ENCODE measurements at regions of chr19 and their contacts with region 1.

Region 1: DNA sequence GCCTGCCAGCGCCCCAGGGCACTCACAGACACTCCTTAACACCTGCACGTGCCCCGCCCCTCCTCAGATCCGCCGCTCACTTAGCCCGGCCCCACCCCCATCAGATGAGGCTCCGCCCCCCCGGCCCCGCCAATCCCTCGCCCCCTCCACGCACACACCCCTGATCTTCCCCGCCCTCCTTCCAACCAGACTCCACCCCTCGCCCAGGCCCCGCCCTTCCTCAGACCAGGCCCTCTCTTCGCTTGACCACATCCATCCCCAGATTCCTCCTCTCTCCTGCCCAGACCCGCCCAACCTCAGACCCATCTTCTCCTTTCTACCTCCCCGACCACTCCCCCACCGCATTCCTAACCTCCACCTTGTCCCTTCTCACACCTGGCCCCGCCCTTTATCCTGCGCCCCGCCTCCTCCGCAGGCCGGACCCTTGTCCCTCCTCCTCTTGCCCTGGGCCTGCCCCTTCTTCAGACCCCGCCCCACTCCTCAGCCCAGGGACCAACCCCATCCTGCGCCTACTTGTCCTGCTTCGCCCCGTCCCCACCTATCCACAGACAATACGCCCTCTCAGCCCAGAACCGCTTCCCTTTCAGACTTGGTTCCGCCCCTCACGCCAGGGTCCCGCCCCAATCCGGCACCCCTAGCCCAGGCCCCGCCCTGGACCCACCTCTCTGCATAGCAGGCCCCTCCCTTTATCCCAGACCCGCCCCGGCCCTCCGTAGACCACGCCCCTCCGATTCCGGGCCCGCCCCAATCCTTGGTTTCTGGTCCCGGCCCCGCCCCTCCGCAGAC is 452 bp upstream of the KLHL26 start:
- DNase-seq: peak; percentile 100
- ATAC-seq: peak; percentile 92
- H3K4me3 Mint-ChIP-seq: peak overlapping the region; percentile 84
- H3K27ac Mint-ChIP-seq: peak overlapping the region; percentile 78
- H3K4me1 Mint-ChIP-seq: peaks cover 24% of the 10 kb centered on the region
- H3K27me3 Mint-ChIP-seq: no peaks in the 10 kb centered on the region

Region 2: DNA sequence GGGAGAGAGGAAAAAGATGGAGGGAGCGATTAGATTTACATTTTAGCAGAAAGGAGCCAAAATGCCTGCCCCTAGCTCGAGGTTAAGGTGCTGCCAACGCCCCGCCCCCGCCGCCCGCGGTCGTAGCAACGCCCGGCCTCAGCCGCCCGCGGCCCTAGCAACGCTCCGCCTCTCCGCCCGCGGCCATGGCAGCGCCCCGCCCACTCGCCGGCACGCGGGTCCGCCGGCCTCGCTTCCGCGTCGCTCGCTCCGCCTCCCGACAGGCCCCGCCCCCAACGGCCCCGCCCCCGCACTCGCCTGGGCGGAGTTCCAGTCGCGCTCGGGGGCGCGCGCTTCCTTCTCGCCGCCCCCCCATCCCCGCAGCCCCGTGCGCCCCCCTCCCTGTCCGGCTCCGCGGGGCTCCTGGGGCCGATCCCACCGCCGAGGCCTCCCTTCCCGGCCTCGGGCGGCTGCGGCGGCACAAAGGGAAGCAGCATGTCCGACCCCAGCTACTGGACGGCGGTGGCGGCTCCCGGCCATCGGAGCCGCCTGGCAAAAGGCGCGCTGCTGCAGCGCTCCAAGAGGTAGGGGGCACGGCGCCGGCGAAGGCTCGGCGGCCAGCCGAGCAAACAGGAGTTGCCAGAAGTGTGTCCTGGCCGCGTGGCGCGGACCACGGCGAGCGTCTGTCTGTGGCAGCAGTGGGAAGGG is 518.5 kb before region 1 on chr19:
- CTCF ChIA-PET with region 1: no interaction called
- POLR2A ChIA-PET with region 1: no interaction called
- intact Hi-C with region 1: loop called in 1 of 2 experiments (anchors 1 kb)
- DNase-seq: peak; percentile 97
- ATAC-seq: peak; percentile 79
- H3K4me3 Mint-ChIP-seq: peak overlapping the region; percentile 74
- H3K27ac Mint-ChIP-seq: peak overlapping the region; percentile 84
- H3K4me1 Mint-ChIP-seq: peaks cover 35% of the 10 kb centered on the region
- H3K27me3 Mint-ChIP-seq: no peaks in the 10 kb centered on the region

Region 3: GRCh38 chr19:18464646-18465045 is 171.7 kb before region 1 on chr19:
- CTCF ChIA-PET with region 1: no interaction called
- POLR2A ChIA-PET with region 1: no interaction called
- intact Hi-C with region 1: no loop called
- DNase-seq: no peak
- ATAC-seq: no peak
- H3K4me3 Mint-ChIP-seq: no peak overlapping the region
- H3K27ac Mint-ChIP-seq: peak overlapping the region; percentile 80
- H3K4me1 Mint-ChIP-seq: peaks cover 11% of the 10 kb centered on the region
- H3K27me3 Mint-ChIP-seq: no peaks in the 10 kb centered on the region

Region 4: DNA sequence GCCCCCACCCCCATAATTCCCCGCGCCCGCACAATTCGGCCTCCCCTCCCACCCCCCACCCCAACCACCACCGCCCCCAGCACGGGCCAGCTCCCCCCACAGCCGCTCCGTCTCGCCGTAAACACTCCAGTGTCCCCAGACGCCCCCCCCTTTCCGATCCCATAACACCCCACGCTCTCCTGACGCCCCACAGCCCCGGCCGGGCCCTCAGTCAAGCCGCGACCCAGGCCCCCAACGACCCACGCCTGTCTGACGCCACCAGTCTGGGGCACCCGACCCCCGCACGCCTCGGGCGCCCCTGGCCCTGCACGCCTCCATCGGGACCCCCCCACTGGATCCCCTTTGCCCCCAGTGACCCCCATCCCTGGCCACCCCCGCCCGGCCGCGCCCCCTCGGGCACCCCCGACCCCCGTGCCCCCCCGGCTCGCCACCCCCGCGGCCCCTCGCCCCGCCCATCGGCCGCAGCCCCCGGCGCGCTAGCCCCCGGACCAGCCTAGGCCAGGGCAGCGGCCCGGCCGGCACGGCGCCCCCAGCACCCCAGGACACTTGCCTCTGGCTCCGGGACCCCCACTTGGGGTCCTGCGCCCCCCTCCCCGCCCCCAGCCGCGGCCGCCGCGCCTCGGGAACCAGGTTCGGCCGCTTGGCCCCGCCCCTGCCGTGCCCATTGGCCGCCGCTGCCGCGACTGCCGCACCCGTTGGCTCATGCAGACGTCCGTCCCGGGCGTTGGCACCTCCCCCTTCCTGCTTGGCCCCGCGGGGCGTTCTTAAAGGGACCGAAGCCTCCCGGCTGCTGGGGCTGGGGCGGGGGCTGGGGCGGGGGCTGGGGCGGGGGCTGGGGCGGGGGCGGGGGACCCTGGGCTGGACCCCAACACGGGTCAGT is 93.2 kb before region 1 on chr19 and contains the start of gene FKBP8:
- CTCF ChIA-PET with region 1: no interaction called
- POLR2A ChIA-PET with region 1: no interaction called
- intact Hi-C with region 1: loop called in 1 of 2 experiments (anchors 1 kb)
- DNase-seq: peak; percentile 98
- ATAC-seq: peak; percentile 92
- H3K4me3 Mint-ChIP-seq: peak within 1 kb of the TSS; percentile 92
- H3K27ac Mint-ChIP-seq: peak within 1 kb of the TSS; percentile 98
- H3K4me1 Mint-ChIP-seq: peaks cover 25% of the 10 kb centered on the region
- H3K27me3 Mint-ChIP-seq: no peaks in the 10 kb centered on the region
- total RNA-seq, gene FKBP8: 208 to 211 TPM

Region 5: DNA sequence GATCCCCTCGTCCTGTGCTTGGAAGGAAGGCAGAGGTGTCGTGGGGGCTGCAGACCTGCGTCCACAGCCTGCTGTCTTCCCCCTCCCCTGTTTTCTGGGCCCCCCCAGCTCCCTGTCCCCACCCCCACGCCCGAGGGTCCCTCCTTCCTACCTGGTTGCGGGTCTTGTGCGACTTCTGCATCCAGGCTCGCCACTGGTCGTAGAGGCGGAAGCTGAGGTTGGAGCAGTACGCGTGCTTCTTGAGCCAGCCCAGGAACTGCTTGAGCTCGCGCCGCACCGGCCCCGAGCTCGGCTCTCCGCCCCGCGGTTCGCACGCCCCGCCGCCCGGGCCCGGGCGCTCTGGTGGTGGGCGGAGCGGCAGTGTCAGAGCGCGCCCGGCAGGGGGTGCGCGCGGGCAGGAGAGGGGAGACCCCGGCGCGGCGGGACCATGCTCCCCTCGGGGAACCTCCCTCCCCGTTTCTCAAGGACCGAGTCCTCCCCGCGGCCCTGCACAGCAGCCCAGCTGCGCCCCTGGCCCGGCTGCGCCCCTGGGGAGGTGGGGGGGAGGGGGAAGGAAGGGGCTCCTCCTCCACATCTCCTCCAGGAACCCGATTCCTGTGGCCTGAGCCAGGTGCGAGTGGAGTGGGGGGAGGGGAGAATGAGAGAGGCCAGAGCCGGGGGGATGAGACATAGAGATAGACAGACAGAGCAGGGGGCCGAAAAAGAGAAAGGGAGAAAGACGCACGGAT is 42.1 kb before region 1 on chr19:
- CTCF ChIA-PET with region 1: no interaction called
- POLR2A ChIA-PET with region 1: no interaction called
- intact Hi-C with region 1: loop called (anchors 1 to 2 kb)
- DNase-seq: peak; percentile 87
- ATAC-seq: peak; percentile 72
- H3K4me3 Mint-ChIP-seq: peak overlapping the region; percentile 72
- H3K27ac Mint-ChIP-seq: peak overlapping the region; percentile 56
- H3K4me1 Mint-ChIP-seq: peaks cover 23% of the 10 kb centered on the region
- H3K27me3 Mint-ChIP-seq: peaks cover 3% of the 10 kb centered on the region

Region 6: DNA sequence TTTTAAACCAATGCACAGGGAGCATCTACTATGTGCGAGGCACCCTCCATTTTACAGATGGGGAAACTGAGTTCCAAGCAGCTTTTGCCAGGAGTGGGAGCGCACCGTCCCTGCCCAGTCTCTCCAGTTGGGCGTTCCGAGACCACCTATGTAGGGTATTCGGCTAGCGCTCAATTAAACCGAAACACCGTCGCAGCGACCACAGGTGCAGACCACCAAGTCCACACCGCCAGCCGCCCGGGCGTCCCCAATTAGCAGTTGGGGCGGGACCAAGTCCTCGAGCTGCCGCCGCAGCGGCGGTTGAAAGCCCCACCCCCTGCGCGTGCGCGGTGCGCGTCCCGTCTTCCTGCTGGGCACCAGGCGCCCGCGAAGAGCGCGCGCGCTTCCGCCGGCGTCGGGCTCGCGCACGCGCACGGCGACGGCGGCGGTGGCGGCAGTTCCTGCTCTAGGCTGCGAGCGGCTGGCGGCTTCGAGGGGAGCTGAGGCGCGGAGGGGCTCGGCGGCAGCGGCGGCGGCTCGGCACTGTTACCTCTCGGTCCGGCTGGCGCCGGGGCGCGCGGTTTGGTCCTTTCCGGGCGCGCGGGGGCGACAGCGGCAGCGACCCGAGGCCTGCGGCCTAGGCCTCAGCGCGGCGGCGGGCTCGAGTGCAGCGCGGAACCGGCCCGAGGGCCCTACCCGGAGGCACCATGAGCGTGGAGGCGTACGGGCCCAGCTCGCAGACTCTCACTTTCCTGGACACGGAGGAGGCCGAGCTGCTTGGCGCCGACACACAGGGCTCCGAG is 195.3 kb after region 1 on chr19 and contains the start of gene UPF1:
- CTCF ChIA-PET with region 1: no interaction called
- POLR2A ChIA-PET with region 1: no interaction called
- intact Hi-C with region 1: loop called in 1 of 2 experiments (anchors 1 kb)
- DNase-seq: peak; percentile 98
- ATAC-seq: peak; percentile 82
- H3K4me3 Mint-ChIP-seq: peak within 1 kb of the TSS; percentile 96
- H3K27ac Mint-ChIP-seq: peak within 1 kb of the TSS; percentile 90
- H3K4me1 Mint-ChIP-seq: peaks cover 34% of the 10 kb centered on the region
- H3K27me3 Mint-ChIP-seq: peaks cover 3% of the 10 kb centered on the region
- total RNA-seq, gene UPF1: 72.4 to 74.0 TPM

Region 7: GRCh38 chr19:18856385-18857126 is 220.2 kb after region 1 on chr19:
- CTCF ChIA-PET with region 1: no interaction called
- POLR2A ChIA-PET with region 1: no interaction called
- intact Hi-C with region 1: no loop called
- DNase-seq: no peak
- ATAC-seq: no peak
- H3K4me3 Mint-ChIP-seq: no peak overlapping the region
- H3K27ac Mint-ChIP-seq: no peak overlapping the region
- H3K4me1 Mint-ChIP-seq: no peaks in the 10 kb centered on the region
- H3K27me3 Mint-ChIP-seq: no peaks in the 10 kb centered on the region

Region 8: DNA sequence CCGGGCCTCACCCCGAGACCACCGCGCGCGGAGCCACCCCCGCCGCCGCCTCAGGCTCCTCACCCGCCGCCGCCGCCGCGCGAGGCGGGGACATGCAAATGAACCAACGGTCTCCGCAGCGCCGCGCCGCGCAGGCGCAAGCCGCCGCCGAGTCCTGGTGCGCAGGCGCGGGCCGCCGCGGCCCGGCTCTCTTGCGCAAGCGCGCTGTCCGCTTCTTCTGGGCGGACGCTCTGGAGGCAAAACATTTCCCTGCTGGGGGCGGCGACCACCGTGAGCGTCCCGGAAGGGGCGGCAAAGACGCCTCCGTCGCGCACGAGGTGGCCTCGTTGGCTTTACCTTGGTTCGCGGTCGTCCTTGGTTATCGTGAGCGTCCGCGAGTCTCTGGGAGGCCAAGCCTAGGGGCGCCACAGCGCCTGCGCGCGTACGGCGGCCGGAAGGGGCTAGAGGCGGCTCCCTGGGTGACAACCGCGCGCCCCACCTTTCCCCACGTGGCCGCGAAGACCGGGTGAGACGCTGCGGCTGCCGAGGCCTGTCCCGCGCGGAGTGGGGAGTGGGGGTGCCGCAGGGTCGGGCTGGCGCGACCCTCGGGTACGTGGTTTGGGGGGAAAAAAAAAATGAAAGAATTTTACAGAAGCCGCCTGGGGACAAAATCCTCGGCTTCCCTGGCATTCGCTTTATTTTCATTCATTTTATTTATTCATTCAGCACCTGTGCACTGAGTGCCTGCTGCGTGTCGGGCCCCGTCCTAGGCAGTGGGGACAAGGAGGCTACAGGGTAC is 397.2 kb after region 1 on chr19 and contains the starts of genes ARMC6 and SUGP2:
- CTCF ChIA-PET with region 1: no interaction called
- POLR2A ChIA-PET with region 1: no interaction called
- intact Hi-C with region 1: loop called in 1 of 2 experiments (anchors 1 kb)
- DNase-seq: peak; percentile 92
- ATAC-seq: peak; percentile 78
- H3K4me3 Mint-ChIP-seq: peak within 1 kb of the TSS; percentile 98
- H3K27ac Mint-ChIP-seq: peak within 1 kb of the TSS; percentile 96
- H3K4me1 Mint-ChIP-seq: peaks cover 31% of the 10 kb centered on the region
- H3K27me3 Mint-ChIP-seq: no peaks in the 10 kb centered on the region
- total RNA-seq, gene ARMC6: 33.0 to 40.8 TPM
- total RNA-seq, gene SUGP2: 89.8 to 104 TPM

Region 9: GRCh38 chr19:19385108-19385899 is 748.9 kb after region 1 on chr19:
- CTCF ChIA-PET with region 1: no interaction called
- POLR2A ChIA-PET with region 1: no interaction called
- intact Hi-C with region 1: loop called in 1 of 2 experiments (anchors 1 kb)
- DNase-seq: peak; percentile 100
- ATAC-seq: peak; percentile 96
- H3K4me3 Mint-ChIP-seq: peak overlapping the region; percentile 86
- H3K27ac Mint-ChIP-seq: peak overlapping the region; percentile 78
- H3K4me1 Mint-ChIP-seq: peaks cover 36% of the 10 kb centered on the region
- H3K27me3 Mint-ChIP-seq: no peaks in the 10 kb centered on the region